ENCODE measurements at regions of chr1 and their contacts with region 1.

Region 1: DNA sequence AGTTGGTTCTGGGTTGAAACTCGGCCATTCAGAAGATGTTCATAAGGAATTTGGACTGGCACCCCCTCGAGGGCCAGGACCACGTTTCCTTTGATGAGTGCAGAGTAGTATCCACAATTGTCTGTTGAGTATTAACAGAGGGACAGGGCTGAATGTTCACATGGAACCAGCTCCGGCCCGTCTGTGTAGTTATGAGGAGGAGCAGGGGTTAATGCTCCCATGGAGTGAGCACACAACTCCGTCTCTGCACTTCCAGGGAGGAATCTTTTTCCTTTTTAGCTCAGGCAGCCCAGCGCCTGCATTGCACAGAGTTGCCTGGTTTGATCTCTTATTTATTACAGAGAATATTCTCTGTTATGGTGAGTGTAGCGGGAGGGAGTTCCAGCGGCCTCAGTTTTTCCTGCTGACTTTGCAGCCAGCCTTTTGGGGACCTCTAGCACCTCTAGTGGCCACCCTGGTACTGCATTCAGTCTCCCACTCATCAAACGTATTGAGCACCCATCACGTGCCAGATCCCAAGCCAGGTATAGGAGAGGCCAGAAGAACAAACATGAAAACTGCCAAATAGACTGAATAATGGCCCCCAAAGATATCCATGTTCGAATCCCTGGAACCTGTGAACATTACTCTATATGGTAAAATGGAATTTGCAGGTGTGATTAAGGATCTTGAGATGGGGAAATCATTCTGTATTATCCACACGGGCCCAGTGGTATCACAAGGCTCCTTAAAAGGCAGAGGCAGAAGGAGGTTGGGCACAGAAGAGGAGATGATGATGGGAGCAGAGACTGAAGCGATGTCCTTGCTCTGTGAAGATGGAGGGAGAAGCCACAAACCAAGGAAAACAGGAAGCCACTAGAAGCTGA is 167.7 kb upstream of the CSF3R start:
- DNase-seq: peak; percentile 82
- ATAC-seq: peak; percentile 90
- H3K4me3 Mint-ChIP-seq: no peak overlapping the region
- H3K27ac Mint-ChIP-seq: no peak overlapping the region
- H3K4me1 Mint-ChIP-seq: peaks cover 2% of the 10 kb centered on the region
- H3K27me3 Mint-ChIP-seq: peaks cover 28% of the 10 kb centered on the region

Region 2: GRCh38 chr1:36369061-36369861 is 281.2 kb before region 1 on chr1:
- CTCF ChIA-PET with region 1: no interaction called
- POLR2A ChIA-PET with region 1: no interaction called
- intact Hi-C with region 1: no loop called
- DNase-seq: peak; percentile 92
- ATAC-seq: peak; percentile 35
- H3K4me3 Mint-ChIP-seq: no peak overlapping the region
- H3K27ac Mint-ChIP-seq: peak overlapping the region; percentile 76
- H3K4me1 Mint-ChIP-seq: peaks cover 69% of the 10 kb centered on the region
- H3K27me3 Mint-ChIP-seq: no peaks in the 10 kb centered on the region

Region 3: GRCh38 chr1:36553591-36554322 is 96.7 kb before region 1 on chr1:
- CTCF ChIA-PET with region 1: no interaction called
- POLR2A ChIA-PET with region 1: no interaction called
- intact Hi-C with region 1: loop called in 1 of 2 experiments (anchors 5 kb)
- DNase-seq: peak; percentile 89
- ATAC-seq: peak; percentile 96
- H3K4me3 Mint-ChIP-seq: no peak overlapping the region
- H3K27ac Mint-ChIP-seq: no peak overlapping the region
- H3K4me1 Mint-ChIP-seq: no peaks in the 10 kb centered on the region
- H3K27me3 Mint-ChIP-seq: peaks cover 36% of the 10 kb centered on the region

Region 4: DNA sequence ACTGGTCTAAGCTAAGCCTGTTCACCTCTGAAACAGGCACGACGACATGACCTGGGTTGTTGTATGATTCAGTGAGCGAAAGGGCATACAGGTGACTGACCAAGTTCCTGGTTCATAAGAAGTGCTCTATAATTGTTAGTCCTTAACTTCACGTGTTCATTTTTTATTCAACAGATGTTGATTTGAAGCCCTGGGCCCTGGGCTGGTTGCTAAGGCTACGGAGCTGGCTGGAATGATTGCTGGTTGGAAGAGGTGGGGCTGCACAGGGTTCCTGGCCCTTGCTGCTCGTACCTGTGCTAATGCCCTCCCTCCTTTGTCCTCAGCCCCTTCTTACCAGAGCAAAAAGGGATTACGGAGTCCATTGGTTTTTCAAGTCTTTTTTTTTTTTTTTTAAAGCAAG is 56.4 kb before region 1 on chr1:
- CTCF ChIA-PET with region 1: no interaction called
- POLR2A ChIA-PET with region 1: no interaction called
- intact Hi-C with region 1: no loop called
- DNase-seq: no peak
- ATAC-seq: no peak
- H3K4me3 Mint-ChIP-seq: no peak overlapping the region
- H3K27ac Mint-ChIP-seq: no peak overlapping the region
- H3K4me1 Mint-ChIP-seq: no peaks in the 10 kb centered on the region
- H3K27me3 Mint-ChIP-seq: peaks cover 8% of the 10 kb centered on the region

Measured in activated CD4-positive, alpha-beta T cell treated with anti-CD3 and anti-CD28 coated beads for 36 hours (primary cell).